Activated T-helper 1 cell treated with anti-CD3 and anti-CD28 coated beads, Interleukin-12 subunit alpha, Interleukin-12 subunit beta, Interleukin-2, Interleukin-4 antibody, amounts not matched to agents 30 ng/mL and 10 ng/mL and 1 ng/mL, durations not matched to agents 14 hours and 24 hours and 36 hours (primary cell): ENCODE measurements at regions of chr10 and their contacts with region 1.

Region 1: GRCh38 chr10:86399879-86400704 is 33.5 kb upstream of the GRID1 start:
- DNase-seq: peak; percentile 88
- H3K4me3 Mint-ChIP-seq: peak overlapping the region; percentile 85
- H3K27ac Mint-ChIP-seq: peak overlapping the region; percentile 92
- H3K4me1 Mint-ChIP-seq: peaks cover 22% of the 10 kb centered on the region
- H3K27me3 Mint-ChIP-seq: peaks cover 15% of the 10 kb centered on the region

Region 2: GRCh38 chr10:86413046-86413728 is 13.1 kb after region 1 on chr10:
- intact Hi-C with region 1: loop called (anchors 1 kb)
- DNase-seq: no peak
- H3K4me3 Mint-ChIP-seq: peak overlapping the region; percentile 42
- H3K27ac Mint-ChIP-seq: peak overlapping the region; percentile 84
- H3K4me1 Mint-ChIP-seq: peaks cover 36% of the 10 kb centered on the region
- H3K27me3 Mint-ChIP-seq: peaks cover 7% of the 10 kb centered on the region

Region 3: DNA sequence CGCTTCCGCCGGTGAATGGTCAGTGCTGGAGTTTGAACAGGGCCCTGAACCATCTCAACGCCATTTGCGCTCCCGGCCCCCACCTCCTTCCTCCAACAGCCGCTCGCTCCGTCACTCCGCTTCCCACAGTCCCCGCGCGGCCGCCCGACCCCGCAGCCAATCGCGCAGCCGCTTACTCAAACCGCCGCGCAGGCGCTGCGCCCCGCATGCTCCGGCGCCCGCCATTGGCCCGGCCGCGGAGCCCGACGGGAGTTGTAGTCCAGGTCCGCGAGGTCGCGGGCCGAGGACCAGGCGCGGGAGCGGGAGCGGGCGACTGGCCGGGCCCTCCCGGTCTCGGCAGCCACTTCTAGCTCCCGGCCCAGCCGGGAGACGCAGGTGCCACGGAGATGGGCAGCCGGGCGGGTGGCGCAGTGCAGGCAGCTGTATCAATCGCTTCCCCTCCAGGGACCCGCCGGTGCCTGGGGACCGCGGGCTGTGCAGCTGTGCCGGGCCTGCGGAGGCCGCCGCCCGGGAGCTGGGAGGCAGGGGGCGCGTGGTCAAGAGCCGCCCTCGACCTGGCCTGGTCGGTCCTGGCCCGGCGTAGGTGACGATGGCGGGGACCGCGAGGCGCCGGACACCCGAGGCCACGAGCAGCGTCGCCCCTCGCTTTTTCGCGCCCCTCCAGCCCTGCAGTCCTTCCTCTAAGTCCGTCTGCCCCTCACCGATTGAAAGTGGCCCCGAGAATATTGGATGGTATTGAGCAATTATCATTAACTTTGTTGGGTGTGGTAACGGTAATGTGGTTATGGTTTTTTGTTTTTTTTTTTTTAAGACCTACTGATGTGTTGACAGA is 121.8 kb after region 1 on chr10 and contains the start of gene WAPL:
- intact Hi-C with region 1: loop called (anchors 1 kb)
- DNase-seq: peak; percentile 95
- H3K4me3 Mint-ChIP-seq: peak within 1 kb of the TSS; percentile 99
- H3K27ac Mint-ChIP-seq: peak within 1 kb of the TSS; percentile 98
- H3K4me1 Mint-ChIP-seq: peaks cover 68% of the 10 kb centered on the region
- H3K27me3 Mint-ChIP-seq: no peaks in the 10 kb centered on the region
- total RNA-seq, gene WAPL: 49.7 and 50.2 TPM in 2 replicates

Region 4: GRCh38 chr10:86710987-86711512 is 311.0 kb after region 1 on chr10:
- intact Hi-C with region 1: loop called (anchors 2 kb)
- DNase-seq: peak; percentile 84
- H3K4me3 Mint-ChIP-seq: peak overlapping the region; percentile 88
- H3K27ac Mint-ChIP-seq: peak overlapping the region; percentile 97
- H3K4me1 Mint-ChIP-seq: peaks cover 17% of the 10 kb centered on the region
- H3K27me3 Mint-ChIP-seq: no peaks in the 10 kb centered on the region